AG04450 (cell line): ENCODE measurements at regions of chr16 and their contacts with region 1.

Region 1: GRCh38 chr16:10408824-10409381 is 23.0 kb downstream of the ATF7IP2 start:
- DNase-seq: no peak
- H3K4me3 ChIP-seq: no peak overlapping the region
- H3K27ac ChIP-seq: no peak overlapping the region
- H3K27me3 ChIP-seq: no peaks in the 10 kb centered on the region
- CTCF ChIP-seq: no peak

Region 2: DNA sequence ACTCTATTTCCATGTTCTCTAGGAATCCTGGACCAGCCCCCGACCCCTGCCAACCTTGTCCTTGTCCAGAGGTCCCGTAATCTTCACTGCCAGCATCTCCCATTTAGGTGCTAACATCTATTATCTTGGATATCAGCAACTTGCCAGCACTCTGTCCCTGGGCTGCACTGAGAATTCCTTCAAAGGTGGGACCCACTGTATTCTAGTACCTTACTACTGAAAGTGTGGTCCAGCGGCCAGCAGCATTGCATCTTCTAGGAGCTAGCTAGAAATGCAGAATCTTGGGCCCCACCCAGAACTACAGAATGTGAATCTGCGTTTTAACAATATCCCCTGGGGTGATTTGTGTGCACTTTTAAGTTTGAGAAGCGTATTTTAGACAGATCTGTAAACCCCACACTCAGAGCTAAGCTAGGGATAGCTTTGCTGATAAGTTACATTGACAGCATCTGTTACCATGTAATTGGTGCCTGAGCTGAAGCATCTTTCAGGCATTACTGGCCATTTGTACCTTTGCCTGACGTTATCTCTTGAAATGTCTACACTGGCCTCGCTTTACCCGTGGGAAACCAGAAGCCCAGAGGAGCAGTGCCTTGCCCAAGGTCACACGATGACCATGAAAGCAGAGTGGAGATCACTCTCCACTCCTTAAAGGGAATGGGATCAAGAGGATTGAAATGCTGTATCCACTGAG is 1726.2 kb before region 1 on chr16:
- CTCF ChIA-PET with region 1: no interaction called
- POLR2A ChIA-PET with region 1: interaction called, 17 read pairs
- DNase-seq: no peak
- H3K4me3 ChIP-seq: no peak overlapping the region
- H3K27ac ChIP-seq: no peak overlapping the region
- H3K27me3 ChIP-seq: peaks cover 6% of the 10 kb centered on the region
- CTCF ChIP-seq: no peak

Region 3: DNA sequence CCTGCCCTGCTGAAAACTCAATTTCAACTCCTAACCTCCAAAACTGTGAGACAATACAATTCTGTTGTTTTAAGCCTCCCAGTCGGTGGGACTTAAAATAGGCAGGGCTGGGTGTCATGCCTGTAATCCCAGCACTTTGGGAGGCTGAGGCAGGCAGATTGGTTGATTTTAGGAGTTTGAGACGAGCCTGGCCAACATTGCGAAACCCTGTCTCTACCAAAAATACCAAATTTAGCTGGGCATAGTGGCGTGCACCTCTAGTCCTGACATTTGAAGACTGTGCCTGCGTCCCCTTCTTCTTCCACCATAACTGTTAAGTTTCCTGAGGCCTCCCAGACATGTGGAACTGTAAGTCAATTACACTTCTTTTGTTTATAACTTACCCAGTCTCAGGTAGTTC is 59.1 kb before region 1 on chr16:
- CTCF ChIA-PET with region 1: no interaction called
- POLR2A ChIA-PET with region 1: no interaction called
- DNase-seq: no peak
- H3K4me3 ChIP-seq: no peak overlapping the region
- H3K27ac ChIP-seq: no peak overlapping the region
- H3K27me3 ChIP-seq: no peaks in the 10 kb centered on the region
- CTCF ChIP-seq: no peak

Region 4: DNA sequence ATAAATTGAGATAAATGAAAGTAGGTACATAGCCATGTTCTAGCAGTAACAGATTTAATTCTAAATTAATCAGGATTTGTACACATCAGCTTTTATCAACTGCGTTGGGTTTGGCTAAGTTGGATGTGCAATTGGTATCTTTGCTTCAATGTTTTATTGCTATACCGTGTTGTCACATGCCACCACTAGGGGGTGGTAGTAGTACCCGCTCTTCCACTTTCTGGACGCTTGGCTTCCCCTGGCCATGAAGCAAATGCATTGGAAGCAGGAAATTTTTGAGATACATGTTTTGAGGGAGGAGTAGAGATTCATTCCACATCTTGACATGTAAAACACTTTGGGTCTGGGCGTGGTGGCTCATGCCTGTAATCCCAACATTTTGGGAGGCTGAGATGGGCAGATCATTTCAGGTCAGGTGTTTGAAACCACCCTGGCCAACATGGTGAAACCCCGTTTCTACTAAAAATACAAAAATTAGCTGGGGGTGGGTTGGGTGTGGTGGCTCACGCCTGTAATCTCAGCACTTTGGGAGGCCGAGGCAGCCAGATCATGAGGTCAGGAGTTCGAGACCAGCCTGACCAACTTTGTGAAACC is 112.9 kb after region 1 on chr16:
- CTCF ChIA-PET with region 1: no interaction called
- POLR2A ChIA-PET with region 1: no interaction called
- DNase-seq: peak; percentile 6
- H3K4me3 ChIP-seq: no peak overlapping the region
- H3K27ac ChIP-seq: no peak overlapping the region
- H3K27me3 ChIP-seq: no peaks in the 10 kb centered on the region
- CTCF ChIP-seq: peak; percentile 80